Motor neuron (in vitro differentiated cells): ENCODE measurements at regions of chr2 and their contacts with region 1.

Region 1: GRCh38 chr2:24984912-24985311 is 13.2 kb upstream of the DNAJC27 start:
- ATAC-seq: peak in 7 of 8 experiments; percentile 65 to 99 (median 98)
- H3K4me3 ChIP-seq: no peak overlapping the region
- H3K27ac ChIP-seq: peak overlapping the region in 1 of 2 donors; percentile 1
- H3K4me1 ChIP-seq: peaks cover 12 to 20% of the 10 kb centered on the region in 2 donors

Region 2: GRCh38 chr2:24351981-24352380 is 632.9 kb before region 1 on chr2:
- in situ Hi-C with region 1: no loop called
- ATAC-seq: no peak
- H3K4me3 ChIP-seq: no peak overlapping the region
- H3K27ac ChIP-seq: no peak overlapping the region
- H3K4me1 ChIP-seq: no peaks in the 10 kb centered on the region

Region 3: GRCh38 chr2:24559475-24560109 is 425.3 kb before region 1 on chr2:
- in situ Hi-C with region 1: no loop called
- ATAC-seq: peak in 5 of 8 experiments; percentile 33 to 79 (median 44)
- H3K4me3 ChIP-seq: no peak overlapping the region
- H3K27ac ChIP-seq: no peak overlapping the region
- H3K4me1 ChIP-seq: no peaks in the 10 kb centered on the region

Region 4: DNA sequence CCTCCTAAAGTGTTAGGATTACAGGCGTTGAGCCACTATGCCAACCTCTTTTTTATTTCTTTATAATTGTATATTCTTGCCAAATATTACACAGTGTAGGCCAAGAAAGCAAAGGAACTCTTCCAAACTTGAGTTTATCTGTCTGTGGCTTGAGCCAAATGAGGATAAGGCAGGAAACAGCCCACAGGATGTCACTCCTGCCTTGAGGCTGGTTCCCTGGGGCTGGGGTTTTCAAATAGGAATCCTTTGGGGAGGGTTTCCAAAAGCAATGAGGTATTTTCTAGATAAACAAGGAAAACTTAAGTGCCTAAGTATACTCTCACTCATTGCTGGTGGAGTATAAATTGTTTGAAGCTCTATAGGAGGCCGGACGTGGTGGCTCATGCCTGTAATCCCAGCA is 121.3 kb before region 1 on chr2:
- in situ Hi-C with region 1: no loop called
- ATAC-seq: no peak
- H3K4me3 ChIP-seq: no peak overlapping the region
- H3K27ac ChIP-seq: no peak overlapping the region
- H3K4me1 ChIP-seq: no peaks in the 10 kb centered on the region

Region 5: DNA sequence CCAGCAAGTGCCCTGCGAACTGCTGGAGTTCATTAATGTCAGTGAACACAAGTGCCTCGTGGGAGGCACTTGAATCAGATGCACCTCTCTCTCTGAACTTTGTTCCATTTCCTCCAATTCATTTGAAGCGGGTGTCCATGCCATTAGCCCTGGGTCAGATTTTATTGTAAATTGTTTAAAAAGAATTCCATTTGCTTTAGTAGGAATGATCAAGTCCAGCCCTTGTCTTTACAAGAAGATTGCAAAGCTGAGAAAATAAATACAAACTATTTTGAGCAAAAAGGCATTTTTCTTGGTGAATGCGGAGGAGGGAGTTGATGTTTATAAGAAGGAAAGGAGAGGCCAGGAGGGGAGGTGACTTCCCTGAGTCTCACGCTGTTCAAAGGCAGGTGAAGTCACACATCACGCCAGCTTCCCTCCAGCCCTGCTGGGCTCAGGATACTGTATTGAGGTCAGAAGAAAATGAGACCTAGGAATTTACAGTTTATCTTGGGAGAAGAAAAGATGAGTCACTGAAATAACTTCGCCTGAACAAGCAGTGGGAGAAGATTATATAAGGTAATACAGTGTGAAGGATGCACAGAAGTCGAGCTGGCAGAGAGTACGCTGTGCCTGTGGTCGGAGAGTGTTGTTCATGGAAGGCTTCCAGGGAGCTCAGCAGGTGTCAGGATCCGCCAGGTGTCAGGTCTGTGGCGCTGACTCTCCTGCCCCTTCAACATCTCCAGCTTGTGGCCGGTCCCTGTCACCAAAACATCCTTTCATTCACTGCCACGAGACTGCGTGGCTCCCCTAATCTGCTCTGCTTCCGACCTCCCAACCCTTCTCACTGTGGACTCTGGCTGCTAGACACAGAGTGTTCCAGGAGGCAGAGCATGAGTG is 93.5 kb after region 1 on chr2:
- in situ Hi-C with region 1: no loop called
- ATAC-seq: peak in 7 of 8 experiments; percentile 8 to 78 (median 54)
- H3K4me3 ChIP-seq: no peak overlapping the region
- H3K27ac ChIP-seq: no peak overlapping the region
- H3K4me1 ChIP-seq: peaks cover 4 to 10% of the 10 kb centered on the region in 2 donors

Region 6: DNA sequence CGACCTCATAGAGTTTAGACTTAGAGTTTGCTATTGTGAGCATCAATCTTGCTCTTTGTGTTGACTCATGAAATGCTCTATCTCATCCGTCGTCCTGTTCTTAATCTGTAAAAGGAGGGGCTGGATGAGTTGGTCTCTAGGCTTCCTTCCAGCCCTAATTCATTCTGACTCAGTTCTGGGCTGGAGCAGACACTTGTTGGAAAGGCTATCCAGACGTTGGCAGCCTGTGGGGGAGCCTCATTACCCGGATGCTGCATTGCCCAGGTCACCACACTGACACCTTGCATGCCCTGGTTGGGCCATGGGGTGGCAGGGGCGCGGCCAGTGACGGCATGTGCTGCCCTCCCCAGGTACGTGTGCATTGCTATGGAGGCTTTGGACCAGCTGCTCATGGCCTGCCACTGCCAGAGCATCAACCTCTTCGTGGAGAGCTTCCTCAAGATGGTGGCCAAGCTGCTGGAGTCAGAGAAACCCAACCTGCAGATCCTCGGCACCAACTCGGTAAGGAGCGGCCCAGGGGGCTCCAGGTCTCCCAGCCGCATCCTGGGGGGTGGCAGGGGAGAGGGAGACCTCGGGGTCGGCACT is 118.5 kb after region 1 on chr2:
- in situ Hi-C with region 1: loop called in 1 of 9 experiments (anchors 25 kb)
- ATAC-seq: peak in 3 of 8 experiments; percentile 15 to 71 (median 50)
- H3K4me3 ChIP-seq: no peak overlapping the region
- H3K27ac ChIP-seq: no peak overlapping the region
- H3K4me1 ChIP-seq: peaks cover 10 to 13% of the 10 kb centered on the region in 2 donors

Region 7: DNA sequence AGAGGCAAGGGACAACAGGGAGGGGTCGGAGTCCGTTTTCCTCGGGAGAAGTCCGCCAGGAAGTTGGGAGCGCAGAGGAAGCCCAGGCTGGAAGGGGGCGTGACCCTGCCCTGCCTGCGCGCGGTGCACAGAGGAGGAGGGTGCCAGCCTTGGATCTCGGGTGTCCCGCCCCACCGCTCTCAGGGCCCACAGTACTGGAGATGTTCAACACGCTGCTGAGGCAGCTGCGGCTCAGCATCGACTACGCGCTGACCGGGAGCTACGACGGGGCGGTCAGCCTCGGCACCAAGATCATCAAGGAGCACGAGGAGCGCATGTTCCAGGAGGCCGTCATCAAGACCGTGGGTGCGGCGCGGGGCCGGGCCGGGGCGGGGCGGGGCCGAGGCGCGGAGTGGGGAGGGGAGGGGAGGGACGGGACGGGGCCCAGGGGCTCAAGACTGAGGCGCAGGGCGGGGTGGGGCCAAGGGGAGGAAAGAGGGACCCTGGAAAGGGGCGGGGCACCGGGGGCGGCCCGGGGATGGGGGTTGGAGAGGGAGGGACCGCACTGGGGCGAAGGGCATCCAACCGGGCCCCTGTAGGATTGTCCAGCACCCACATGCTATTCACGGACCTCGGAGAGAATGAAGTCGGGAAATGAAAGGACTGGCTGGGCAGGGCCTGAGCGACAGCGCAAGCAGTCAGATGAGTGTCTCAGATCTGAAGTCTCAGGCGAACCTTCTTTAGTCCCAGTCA is 146.8 kb after region 1 on chr2:
- in situ Hi-C with region 1: loop called in 2 of 9 experiments (anchors 10 to 25 kb)
- ATAC-seq: peak in 7 of 8 experiments; percentile 14 to 84 (median 59)
- H3K4me3 ChIP-seq: no peak overlapping the region
- H3K27ac ChIP-seq: no peak overlapping the region
- H3K4me1 ChIP-seq: peaks cover 0 to 7% of the 10 kb centered on the region in 2 donors